ENCODE measurements at regions of chr3 and their contacts with region 1.

Region 1: GRCh38 chr3:44511238-44511567 is 33.7 kb upstream of the ZNF445 start:
- DNase-seq: no peak
- H3K27ac ChIP-seq: peak overlapping the region; percentile 87
- CTCF ChIP-seq: no peak

Region 2: DNA sequence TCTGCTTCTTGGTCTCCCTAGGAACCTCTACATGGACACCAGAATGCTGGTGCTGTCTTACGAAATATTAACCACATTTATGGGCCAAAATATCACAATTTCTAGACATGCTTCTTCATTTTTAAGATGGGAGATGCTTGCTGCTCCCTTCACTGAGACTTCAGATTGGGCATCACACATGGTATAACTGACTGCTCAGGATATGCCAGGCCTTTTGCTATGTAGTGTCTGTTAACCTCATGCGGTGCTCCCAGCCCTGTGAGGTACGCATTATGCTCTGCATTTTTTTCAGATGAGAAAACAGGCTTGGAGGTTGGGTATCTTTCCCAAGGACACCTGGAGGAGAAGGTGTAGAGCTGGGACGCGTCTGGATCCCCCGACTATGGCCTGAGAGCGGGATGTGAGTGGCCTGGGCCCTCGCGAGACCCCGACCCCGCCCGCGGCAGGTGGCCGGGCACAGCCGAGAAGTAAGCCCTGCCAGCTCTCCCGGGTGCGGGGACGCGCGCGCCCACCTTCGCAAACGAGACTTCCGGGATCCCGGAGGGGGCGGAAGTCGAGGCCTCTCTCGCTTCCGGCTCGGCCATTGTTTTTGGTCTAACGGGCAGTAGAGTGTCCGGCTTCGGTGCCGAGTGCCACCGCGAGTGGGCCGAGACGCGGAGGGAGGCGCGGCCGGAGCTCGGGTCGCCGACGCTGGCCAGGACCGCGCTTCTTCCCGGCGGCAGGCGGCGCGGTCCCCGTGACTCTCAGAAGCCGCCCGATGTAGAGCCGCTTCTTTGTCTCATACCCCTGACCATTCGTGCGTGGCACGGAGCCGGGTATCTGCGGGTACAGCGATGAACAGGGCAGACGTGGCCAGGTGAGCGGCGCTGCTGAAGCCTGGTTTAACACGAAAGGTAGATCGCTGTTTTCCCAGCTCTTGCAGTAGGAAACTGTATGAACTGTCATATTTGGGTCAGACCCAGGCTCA is 43.7 kb after region 1 on chr3 and contains the start of gene ZKSCAN7:
- CTCF ChIA-PET with region 1: no interaction called
- POLR2A ChIA-PET with region 1: interaction called, 11 read pairs
- DNase-seq: peak; percentile 35
- H3K27ac ChIP-seq: peak within 1 kb of the TSS; percentile 48
- CTCF ChIP-seq: no peak

Measured in RWPE1 (cell line).